Vagina (tissue), 2 donors: ENCODE measurements at regions of chr17 and their contacts with region 1.

Region 1: GRCh38 chr17:74864866-74865395 is 5.2 kb upstream of the GRIN2C start:
- DNase-seq: no peak
- H3K4me3 ChIP-seq: no peak overlapping the region
- H3K27ac ChIP-seq: no peak overlapping the region
- H3K4me1 ChIP-seq: peaks cover 20% of the 10 kb centered on the region
- H3K27me3 ChIP-seq: peaks cover 12% of the 10 kb centered on the region
- CTCF ChIP-seq: peak; percentile 88 to 95 (median 93)
- POLR2A ChIP-seq: no peak

Region 2: GRCh38 chr17:74579900-74580299 is 285.0 kb before region 1 on chr17:
- intact Hi-C with region 1: no loop called
- DNase-seq: no peak
- H3K4me3 ChIP-seq: no peak overlapping the region
- H3K27ac ChIP-seq: no peak overlapping the region
- H3K4me1 ChIP-seq: no peaks in the 10 kb centered on the region
- H3K27me3 ChIP-seq: no peaks in the 10 kb centered on the region
- CTCF ChIP-seq: no peak
- POLR2A ChIP-seq: no peak

Region 3: DNA sequence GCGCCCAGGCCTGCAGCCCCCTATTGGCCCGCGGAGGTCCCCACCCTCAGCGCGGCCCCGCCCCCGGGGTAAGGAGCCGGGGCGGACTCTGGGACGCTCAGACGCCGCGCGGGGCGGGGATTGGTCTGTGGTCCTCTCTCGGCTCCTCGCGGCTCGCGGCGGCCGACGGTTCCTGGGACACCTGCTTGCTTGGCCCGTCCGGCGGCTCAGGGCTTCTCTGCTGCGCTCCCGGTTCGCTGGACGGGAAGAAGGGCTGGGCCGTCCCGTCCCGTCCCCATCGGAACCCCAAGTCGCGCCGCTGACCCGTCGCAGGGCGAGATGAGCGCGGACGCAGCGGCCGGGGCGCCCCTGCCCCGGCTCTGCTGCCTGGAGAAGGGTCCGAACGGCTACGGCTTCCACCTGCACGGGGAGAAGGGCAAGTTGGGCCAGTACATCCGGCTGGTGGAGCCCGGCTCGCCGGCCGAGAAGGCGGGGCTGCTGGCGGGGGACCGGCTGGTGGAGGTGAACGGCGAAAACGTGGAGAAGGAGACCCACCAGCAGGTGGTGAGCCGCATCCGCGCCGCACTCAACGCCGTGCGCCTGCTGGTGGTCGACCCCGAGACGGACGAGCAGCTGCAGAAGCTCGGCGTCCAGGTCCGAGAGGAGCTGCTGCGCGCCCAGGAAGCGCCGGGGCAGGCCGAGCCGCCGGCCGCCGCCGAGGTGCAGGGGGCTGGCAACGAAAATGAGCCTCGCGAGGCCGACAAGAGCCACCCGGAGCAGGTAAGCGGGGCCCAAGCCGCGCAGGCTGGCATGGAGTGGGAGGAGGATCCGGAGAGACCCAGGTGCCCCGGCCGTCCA is 116.2 kb before region 1 on chr17 and contains the start of gene NHERF1:
- intact Hi-C with region 1: loop called (anchors 2 kb)
- DNase-seq: no peak
- H3K4me3 ChIP-seq: peak within 1 kb of the TSS; percentile 62 to 98
- H3K27ac ChIP-seq: peak within 1 kb of the TSS; percentile 86
- H3K4me1 ChIP-seq: peaks cover 67% of the 10 kb centered on the region
- H3K27me3 ChIP-seq: no peaks in the 10 kb centered on the region
- CTCF ChIP-seq: no peak
- POLR2A ChIP-seq: peak in 1 of 2 donors; percentile 93
- total RNA-seq, gene NHERF1: 57.2 TPM

Region 4: GRCh38 chr17:74790161-74791054 is 74.5 kb before region 1 on chr17:
- intact Hi-C with region 1: loop called (anchors 5 kb)
- DNase-seq: no peak
- H3K4me3 ChIP-seq: no peak overlapping the region
- H3K27ac ChIP-seq: no peak overlapping the region
- H3K4me1 ChIP-seq: no peaks in the 10 kb centered on the region
- H3K27me3 ChIP-seq: no peaks in the 10 kb centered on the region
- CTCF ChIP-seq: no peak
- POLR2A ChIP-seq: no peak